Activated naive CD4-positive, alpha-beta T cell treated with anti-CD3 and anti-CD28 coated beads for 36 hours (primary cell): ENCODE measurements at regions of chr2 and their contacts with region 1.

Region 1: GRCh38 chr2:234288974-234289455 is 207.9 kb downstream of the ARL4C start:
- DNase-seq: peak; percentile 89
- H3K4me3 Mint-ChIP-seq: no peak overlapping the region
- H3K27ac Mint-ChIP-seq: peak overlapping the region; percentile 96
- H3K4me1 Mint-ChIP-seq: peaks cover 71% of the 10 kb centered on the region
- H3K27me3 Mint-ChIP-seq: no peaks in the 10 kb centered on the region

Region 2: DNA sequence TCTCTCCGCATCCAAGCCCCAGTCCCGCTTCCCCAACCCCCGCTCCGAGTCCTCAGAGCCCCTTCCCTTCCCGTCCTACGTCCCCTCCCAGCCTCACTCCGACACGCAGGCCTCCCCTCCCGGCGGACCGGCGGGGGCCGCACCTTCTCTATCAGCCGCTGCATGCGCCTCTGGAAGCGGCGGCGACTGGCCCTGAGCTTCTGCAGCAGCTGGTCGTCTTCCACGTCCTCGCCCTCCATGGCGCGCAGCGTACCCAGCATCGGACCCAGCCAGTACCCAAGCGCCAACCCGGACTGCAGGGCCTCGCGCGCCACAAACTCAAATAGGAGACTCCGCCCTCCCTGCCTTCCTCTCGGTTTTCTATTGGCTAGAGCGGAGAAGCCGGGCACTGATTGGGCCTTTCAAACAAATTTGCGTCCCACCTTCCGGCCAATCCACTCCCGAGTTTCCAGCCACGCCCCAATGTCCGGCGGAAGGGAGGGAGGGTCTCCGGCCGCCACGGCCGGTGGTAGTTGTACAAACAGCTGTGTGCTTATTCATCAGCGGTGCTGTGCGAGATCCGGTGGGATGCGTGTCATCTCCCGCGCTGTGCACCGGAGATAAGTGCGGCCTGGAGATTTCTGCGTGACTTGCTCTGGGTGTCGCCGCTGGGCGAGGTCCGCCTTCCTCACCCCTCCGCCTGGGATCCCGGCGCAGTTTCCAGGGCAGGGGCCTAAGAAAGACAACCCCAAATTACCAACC is 434.6 kb before region 1 on chr2 and contains the start of gene HJURP:
- CTCF ChIA-PET with region 1: no interaction called
- intact Hi-C with region 1: loop called (anchors 5 kb)
- DNase-seq: peak; percentile 98
- H3K4me3 Mint-ChIP-seq: peak within 1 kb of the TSS; percentile 93
- H3K27ac Mint-ChIP-seq: peak within 1 kb of the TSS; percentile 95
- H3K4me1 Mint-ChIP-seq: peaks cover 17% of the 10 kb centered on the region
- H3K27me3 Mint-ChIP-seq: peaks cover 7% of the 10 kb centered on the region
- total RNA-seq, gene HJURP: 127 to 129 TPM

Region 3: DNA sequence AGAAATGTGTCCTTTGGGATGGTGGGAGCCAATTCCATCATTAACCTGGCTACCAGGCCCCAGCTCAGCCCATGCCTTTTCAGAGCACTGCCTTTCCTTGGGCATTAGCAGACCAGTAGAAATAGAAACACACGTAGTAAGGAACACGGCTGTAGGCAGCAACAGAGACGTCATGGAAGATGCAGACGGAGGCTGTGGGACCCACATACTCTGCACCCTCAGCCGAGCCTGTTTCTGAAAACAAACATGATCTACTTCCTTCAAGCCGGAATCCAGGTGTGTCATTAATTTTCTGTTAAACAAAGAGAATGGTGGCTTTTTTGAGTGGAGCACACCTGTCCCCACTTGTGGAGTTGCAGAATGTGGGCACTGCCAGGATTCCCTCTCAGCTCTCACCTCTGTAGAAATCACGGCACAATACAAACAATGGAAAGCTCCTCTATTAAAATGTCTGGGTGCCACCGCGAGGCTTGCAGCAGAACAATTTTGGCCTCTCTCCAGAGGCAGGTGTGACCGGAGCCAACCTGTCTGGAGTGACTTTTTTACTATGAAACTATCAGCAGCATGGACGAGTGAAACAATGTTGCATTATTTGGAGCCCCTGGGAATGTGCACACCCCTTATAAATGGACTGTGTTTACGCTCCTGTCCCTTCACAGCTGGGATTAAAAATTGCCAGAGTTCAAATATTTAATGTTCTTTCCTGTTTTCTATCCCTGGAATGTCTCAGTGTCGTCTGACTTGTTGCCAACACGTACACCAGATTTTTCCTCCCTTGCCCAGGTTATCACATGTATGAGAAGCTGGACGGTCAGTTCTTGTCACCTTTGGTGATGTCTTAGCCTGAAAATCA is 206.8 kb before region 1 on chr2:
- CTCF ChIA-PET with region 1: no interaction called
- intact Hi-C with region 1: no loop called
- DNase-seq: no peak
- H3K4me3 Mint-ChIP-seq: no peak overlapping the region
- H3K27ac Mint-ChIP-seq: no peak overlapping the region
- H3K4me1 Mint-ChIP-seq: peaks cover 3% of the 10 kb centered on the region
- H3K27me3 Mint-ChIP-seq: no peaks in the 10 kb centered on the region

Region 4: DNA sequence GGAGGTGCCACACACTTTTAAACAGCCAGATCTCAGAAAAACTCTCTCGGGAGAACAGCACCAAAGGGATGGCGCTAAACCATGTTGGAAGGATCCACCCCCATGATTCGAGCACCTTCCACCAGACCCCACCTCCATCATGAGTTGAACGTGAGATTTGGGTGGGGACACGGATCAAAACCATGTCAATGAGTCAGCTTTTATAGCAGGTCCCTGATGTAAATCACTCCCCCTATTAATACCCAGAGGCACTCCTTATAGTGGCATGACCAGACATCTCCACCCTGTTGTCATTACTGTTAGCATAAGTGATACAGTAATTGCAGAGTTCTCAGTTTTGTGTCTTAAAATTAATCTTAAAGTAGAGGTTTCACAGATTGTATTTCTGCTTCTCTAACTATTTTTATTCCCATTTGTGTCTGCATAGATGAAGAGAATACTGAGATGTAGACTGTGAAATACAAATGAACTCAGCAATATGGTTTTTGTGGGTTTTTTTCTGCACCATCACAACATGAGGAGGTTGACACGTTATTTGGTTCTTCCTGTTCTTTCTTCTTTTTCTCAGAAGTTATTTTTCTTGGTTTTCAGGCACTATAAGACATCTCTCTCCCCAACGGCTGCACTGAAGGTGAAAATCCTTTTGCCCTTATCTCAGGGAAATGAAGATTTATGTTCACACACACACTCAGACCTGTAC is 10.3 kb before region 1 on chr2:
- CTCF ChIA-PET with region 1: interaction called, 18 read pairs
- intact Hi-C with region 1: loop called (anchors 1 kb)
- DNase-seq: peak; percentile 39
- H3K4me3 Mint-ChIP-seq: no peak overlapping the region
- H3K27ac Mint-ChIP-seq: peak overlapping the region; percentile 50
- H3K4me1 Mint-ChIP-seq: peaks cover 31% of the 10 kb centered on the region
- H3K27me3 Mint-ChIP-seq: no peaks in the 10 kb centered on the region

Region 5: GRCh38 chr2:234368861-234369261 is 79.8 kb after region 1 on chr2:
- CTCF ChIA-PET with region 1: interaction called, 18 read pairs
- intact Hi-C with region 1: loop called (anchors 1 kb)
- DNase-seq: peak; percentile 58
- H3K4me3 Mint-ChIP-seq: no peak overlapping the region
- H3K27ac Mint-ChIP-seq: peak overlapping the region; percentile 74
- H3K4me1 Mint-ChIP-seq: peaks cover 73% of the 10 kb centered on the region
- H3K27me3 Mint-ChIP-seq: no peaks in the 10 kb centered on the region

Region 6: GRCh38 chr2:234451852-234452625 is 163.0 kb after region 1 on chr2:
- CTCF ChIA-PET with region 1: interaction called, 10 read pairs
- intact Hi-C with region 1: loop called (anchors 1 kb)
- DNase-seq: no peak
- H3K4me3 Mint-ChIP-seq: peak overlapping the region; percentile 78
- H3K27ac Mint-ChIP-seq: peak overlapping the region; percentile 96
- H3K4me1 Mint-ChIP-seq: peaks cover 73% of the 10 kb centered on the region
- H3K27me3 Mint-ChIP-seq: no peaks in the 10 kb centered on the region

Region 7: DNA sequence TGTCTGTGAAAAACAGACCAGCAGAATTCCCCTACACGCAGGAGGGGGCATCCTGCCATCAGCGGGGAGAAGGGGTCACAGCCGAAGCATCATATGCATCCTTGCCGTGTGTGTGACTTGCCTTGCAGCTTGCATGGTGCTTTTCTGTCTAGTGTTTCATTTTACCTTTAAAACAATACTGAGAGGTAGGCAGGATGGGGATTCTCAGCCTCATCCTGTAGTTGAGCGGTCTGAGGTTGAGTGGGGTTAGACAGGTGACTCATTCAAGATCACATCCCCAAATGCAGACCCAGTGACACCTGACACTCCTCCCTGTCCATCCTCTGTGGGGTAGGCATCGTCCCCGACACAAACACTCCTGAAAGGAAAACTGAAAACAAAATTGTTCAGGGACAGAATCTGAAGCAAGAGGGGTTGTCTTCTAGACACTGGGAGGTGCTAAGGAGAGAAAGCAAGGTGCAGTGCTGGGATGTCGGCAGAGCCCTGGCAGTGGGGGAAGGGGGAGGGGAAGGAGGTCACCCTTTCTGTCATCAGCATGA is 200.0 kb after region 1 on chr2:
- CTCF ChIA-PET with region 1: interaction called, 6 read pairs
- intact Hi-C with region 1: loop called (anchors 1 kb)
- DNase-seq: peak; percentile 79
- H3K4me3 Mint-ChIP-seq: peak overlapping the region; percentile 78
- H3K27ac Mint-ChIP-seq: peak overlapping the region; percentile 94
- H3K4me1 Mint-ChIP-seq: peaks cover 84% of the 10 kb centered on the region
- H3K27me3 Mint-ChIP-seq: no peaks in the 10 kb centered on the region